ENCODE measurements at regions of chr1 and their contacts with region 1.

Region 1: GRCh38 chr1:230728710-230729392 is 14.9 kb upstream of the AGT start:
- DNase-seq: no peak
- ATAC-seq: no peak
- H3K4me3 ChIP-seq: no peak overlapping the region
- H3K27ac ChIP-seq: peak overlapping the region; percentile 33 to 78 (median 55)
- H3K4me1 ChIP-seq: peaks cover 16 to 27% of the 10 kb centered on the region in 2 donors
- H3K27me3 ChIP-seq: no peaks in the 10 kb centered on the region
- CTCF ChIP-seq: no peak
- POLR2A ChIP-seq: no peak

Region 2: GRCh38 chr1:230713915-230714764 is 14.7 kb before region 1 on chr1 and contains the start of gene AGT:
- in situ Hi-C with region 1: no loop called
- intact Hi-C with region 1: loop called (anchors 2 kb)
- DNase-seq: peak; percentile 86 to 88
- ATAC-seq: peak; percentile 93 to 97
- H3K4me3 ChIP-seq: peak within 1 kb of the TSS; percentile 54 to 62 (median 56)
- H3K27ac ChIP-seq: peak within 1 kb of the TSS; percentile 87 to 92 (median 90)
- H3K4me1 ChIP-seq: peaks cover 23 to 30% of the 10 kb centered on the region in 2 donors
- H3K27me3 ChIP-seq: no peaks in the 10 kb centered on the region
- CTCF ChIP-seq: no peak
- POLR2A ChIP-seq: peak; percentile 59 to 69
- total RNA-seq, gene AGT: 17.3 to 49.6 (median 34.5) TPM

Region 3: DNA sequence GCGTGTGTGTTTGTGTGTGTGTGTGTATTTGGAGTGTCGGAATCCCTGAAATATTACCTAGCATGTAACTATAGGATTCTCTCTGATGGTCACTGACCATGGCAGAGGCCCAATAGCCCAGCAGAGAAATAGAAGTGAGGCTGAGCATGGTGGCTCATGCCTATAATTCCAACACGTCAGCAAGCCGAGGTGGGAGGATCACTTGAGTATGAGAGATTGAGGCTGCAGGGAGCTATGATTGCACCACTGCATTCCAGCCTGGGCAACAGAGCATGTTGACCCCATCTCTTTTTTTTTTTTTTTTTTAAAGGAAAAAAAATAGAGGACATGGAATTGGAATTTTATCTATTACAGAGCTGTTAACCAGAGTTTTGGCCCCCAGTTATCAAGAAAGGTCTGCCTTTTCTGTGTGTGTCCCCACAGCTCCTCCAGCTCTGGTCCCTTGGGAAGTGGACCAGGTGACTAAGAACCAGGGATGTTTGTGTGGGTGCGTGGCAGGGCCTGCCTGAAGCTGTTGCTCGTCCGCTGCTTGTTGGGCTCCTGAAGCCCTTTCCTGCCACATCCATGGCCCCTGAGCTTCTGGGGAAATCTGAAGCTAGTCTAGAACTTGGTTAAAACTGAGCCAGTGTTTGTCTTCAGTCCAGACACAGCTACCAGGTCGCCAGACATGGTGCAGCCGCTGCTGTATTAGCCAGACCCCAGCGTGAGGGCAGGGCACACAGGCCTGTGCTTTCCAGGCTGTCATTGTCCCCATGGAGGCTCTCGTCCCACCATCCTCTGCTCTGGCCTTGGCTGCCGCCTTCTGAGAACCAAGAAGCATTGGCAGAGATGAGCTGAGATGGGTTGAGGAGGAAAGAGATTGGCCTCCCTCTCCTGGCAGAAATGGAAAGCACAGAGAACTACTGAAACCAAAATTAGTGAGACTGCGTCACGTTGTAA is 43.9 kb after region 1 on chr1:
- in situ Hi-C with region 1: no loop called
- intact Hi-C with region 1: no loop called
- DNase-seq: peak; percentile 18 to 39
- ATAC-seq: peak; percentile 76 to 90
- H3K4me3 ChIP-seq: peak overlapping the region in 1 of 4 donors; percentile 9
- H3K27ac ChIP-seq: no peak overlapping the region
- H3K4me1 ChIP-seq: no peaks in the 10 kb centered on the region
- H3K27me3 ChIP-seq: no peaks in the 10 kb centered on the region
- CTCF ChIP-seq: peak; percentile 45 to 69 (median 63)
- POLR2A ChIP-seq: no peak

Region 4: DNA sequence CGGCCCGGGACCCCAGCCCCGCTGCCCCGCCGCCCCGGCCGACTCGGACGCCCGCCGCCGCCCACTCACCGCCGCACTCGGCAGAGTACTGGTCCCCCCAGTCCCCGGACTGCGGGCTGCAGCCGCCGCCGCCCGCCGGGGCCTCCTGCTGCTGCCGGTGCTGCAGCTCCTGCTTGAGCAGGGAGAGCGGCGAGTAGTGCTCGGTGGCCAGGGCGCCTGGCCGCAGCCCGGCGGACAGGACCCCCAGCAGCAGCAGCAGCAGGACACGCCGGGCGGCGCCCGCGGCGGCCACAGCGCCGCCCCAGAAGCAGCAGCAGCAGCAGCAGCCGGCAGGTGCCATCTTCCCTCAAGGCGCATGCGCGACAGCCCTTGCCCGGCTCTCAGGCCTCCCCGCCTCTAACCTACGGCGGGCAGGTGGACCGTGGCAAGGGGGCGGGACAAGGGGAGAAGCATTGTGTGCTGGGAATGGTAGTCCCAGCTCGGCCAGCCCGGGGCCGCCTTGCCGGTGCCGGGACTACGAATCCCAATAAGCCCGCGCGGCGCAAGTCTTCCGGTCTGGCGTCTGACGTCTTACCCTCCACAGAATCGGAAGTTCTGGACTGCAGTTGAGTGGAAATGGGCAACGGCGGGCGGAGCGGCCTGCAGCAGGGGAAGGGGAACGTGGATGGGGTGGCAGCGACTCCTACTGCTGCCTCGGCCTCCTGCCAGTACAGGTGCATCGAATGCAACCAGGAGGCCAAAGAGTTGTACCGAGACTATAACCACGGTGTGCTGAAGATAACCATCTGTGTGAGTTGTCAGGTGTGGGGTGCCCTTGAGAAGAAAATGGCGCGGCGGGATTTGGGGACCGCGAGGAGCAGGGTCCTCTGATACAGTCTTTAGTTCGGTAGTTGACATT is 249.9 kb after region 1 on chr1 and contains the starts of genes ARV1 and TTC13:
- in situ Hi-C with region 1: no loop called
- intact Hi-C with region 1: no loop called
- DNase-seq: peak; percentile 98
- ATAC-seq: peak; percentile 96 to 97
- H3K4me3 ChIP-seq: peak within 1 kb of the TSS; percentile 84 to 96 (median 88)
- H3K27ac ChIP-seq: peak within 1 kb of the TSS; percentile 71 to 82 (median 78)
- H3K4me1 ChIP-seq: peaks cover 17 to 24% of the 10 kb centered on the region in 2 donors
- H3K27me3 ChIP-seq: no peaks in the 10 kb centered on the region
- CTCF ChIP-seq: peak in 4 of 5 experiments; percentile 8 to 29 (median 23)
- POLR2A ChIP-seq: peak; percentile 48 to 56
- total RNA-seq, gene ARV1: 7.9 to 21.3 (median 10.5) TPM
- total RNA-seq, gene TTC13: 16.0 to 36.0 (median 22.7) TPM